ENCODE measurements at regions of chr5 and their contacts with region 1.

Region 1: GRCh38 chr5:7615566-7616061 is 219.7 kb downstream of the ADCY2 start:
- H3K4me3 ChIP-seq: no peak overlapping the region
- H3K27ac ChIP-seq: no peak overlapping the region
- H3K4me1 ChIP-seq: no peaks in the 10 kb centered on the region
- CTCF ChIP-seq: no peak

Region 2: DNA sequence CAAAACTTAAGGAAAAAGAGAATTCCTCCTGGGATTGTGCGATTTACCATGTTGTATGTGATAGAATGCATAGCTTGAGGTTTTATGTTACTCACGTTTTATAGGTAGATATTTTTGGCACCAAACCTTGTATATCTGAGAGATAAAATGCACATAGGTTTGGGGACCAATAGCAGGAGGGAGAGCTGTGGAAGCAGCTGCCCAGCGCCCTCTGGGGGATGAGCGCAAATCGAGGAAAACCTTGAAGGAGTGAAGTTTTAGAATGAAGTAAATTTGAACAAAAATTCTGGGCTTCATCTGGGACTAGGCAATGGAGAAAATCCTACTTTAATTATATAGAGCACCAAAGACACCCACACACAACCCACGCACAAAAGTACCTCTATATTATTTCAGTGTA is 22.7 kb before region 1 on chr5:
- CTCF ChIA-PET with region 1: interaction called, 10 read pairs
- POLR2A ChIA-PET with region 1: no interaction called
- H3K4me3 ChIP-seq: no peak overlapping the region
- H3K27ac ChIP-seq: no peak overlapping the region
- H3K4me1 ChIP-seq: no peaks in the 10 kb centered on the region
- CTCF ChIP-seq: no peak

Measured in HEK293 (cell line).